Right cardiac atrium (tissue), 5 donors: ENCODE measurements at regions of chr20 and their contacts with region 1.

Region 1: GRCh38 chr20:25178563-25179438 is 16.7 kb upstream of the ENTPD6 start:
- DNase-seq: peak in 2 of 3 donors; percentile 54 to 63
- ATAC-seq: peak; percentile 88
- H3K4me3 ChIP-seq: no peak overlapping the region
- H3K27ac ChIP-seq: no peak overlapping the region
- H3K4me1 ChIP-seq: peaks cover 4% of the 10 kb centered on the region
- H3K27me3 ChIP-seq: no peaks in the 10 kb centered on the region

Region 2: DNA sequence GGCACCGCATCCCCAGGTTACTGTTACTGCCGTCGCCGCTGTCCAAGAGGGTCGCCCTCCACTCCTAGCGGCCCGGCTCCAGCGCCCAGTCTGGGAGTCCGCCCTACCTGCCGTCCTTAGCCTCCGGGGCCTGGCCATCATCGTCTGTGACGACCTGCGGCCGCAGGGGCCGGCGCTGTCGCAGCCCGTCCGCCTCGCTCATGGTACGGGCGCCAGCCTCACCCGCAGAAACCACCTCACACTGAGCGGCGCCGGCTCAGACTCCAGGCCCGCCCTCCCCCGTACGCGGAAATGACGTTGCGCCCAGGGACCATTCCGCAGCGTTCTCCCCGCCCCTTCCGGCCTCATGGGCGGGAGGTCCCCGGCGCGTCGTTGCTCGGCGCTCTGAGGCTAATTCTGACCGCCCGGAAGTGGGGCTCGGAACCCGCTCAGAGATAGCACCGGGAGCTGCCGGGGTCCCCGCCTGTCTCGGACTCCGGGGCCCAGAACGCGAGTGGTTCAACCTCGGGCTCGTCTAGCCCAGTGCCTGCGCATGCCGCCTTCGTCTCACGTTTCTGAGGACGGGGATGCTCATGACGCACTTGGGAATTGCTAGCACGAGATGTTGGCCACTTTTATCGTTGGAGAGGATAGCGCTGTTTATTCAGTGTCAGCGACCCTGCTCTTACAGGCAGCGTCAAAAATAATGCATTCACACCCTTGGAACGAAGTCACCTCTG is 186.2 kb before region 1 on chr20 and contains the start of gene APMAP:
- intact Hi-C with region 1: loop called in 2 of 4 experiments (anchors 5 kb)
- DNase-seq: peak; percentile 97 to 99 (median 98)
- ATAC-seq: peak; percentile 97 to 98
- H3K4me3 ChIP-seq: peak within 1 kb of the TSS; percentile 76
- H3K27ac ChIP-seq: peak within 1 kb of the TSS; percentile 98
- H3K4me1 ChIP-seq: no peaks in the 10 kb centered on the region
- H3K27me3 ChIP-seq: no peaks in the 10 kb centered on the region
- total RNA-seq, gene APMAP: 32.8 to 35.1 (median 34.8) TPM

Region 3: DNA sequence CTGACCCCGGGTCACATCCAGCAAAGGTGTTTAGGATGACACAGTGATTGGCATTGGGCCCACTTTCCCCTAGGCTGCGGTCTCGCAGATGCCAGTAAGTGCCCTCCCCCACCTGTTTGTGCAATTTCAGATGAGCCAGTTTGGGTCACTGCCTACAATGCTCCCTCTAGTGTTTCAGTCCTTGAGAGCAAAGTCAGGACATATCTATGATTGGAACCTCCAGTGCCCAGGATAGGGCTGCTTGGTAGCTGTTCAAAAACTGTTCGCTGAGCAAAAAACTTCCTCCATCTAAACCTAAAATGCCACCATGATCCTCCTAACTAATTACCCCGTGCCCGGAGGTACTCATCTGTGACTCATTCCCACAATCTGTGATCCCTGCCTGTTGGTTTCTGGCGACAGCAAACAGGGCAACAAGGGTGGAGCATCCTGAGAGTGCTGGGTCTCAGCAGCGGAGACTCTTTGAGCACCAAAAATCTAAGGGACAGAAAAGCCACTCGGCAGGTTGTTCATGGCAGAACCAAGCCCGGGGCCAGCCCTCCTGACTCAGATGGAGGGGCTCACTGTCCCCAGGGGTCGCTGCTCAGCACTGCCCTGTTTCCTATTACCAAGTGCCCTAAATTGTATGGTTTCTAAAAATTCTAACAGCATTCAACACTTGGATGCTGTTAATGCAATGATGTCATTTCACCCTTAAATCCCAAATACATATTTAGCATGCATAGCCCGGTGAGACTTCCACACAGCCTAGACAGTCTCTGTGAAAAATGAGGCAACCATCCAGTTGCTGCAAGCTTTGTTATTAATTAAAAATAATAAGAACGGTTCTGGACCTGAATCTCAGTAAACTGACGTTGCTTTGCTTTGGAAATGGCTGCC is 101.8 kb before region 1 on chr20:
- intact Hi-C with region 1: loop called in 2 of 4 experiments (anchors 5 kb)
- DNase-seq: no peak
- ATAC-seq: peak; percentile 27 to 42
- H3K4me3 ChIP-seq: no peak overlapping the region
- H3K27ac ChIP-seq: no peak overlapping the region
- H3K4me1 ChIP-seq: no peaks in the 10 kb centered on the region
- H3K27me3 ChIP-seq: no peaks in the 10 kb centered on the region

Region 4: GRCh38 chr20:25084626-25085187 is 94.1 kb before region 1 on chr20:
- intact Hi-C with region 1: loop called in 2 of 4 experiments (anchors 5 kb)
- DNase-seq: no peak
- ATAC-seq: no peak
- H3K4me3 ChIP-seq: no peak overlapping the region
- H3K27ac ChIP-seq: no peak overlapping the region
- H3K4me1 ChIP-seq: no peaks in the 10 kb centered on the region
- H3K27me3 ChIP-seq: no peaks in the 10 kb centered on the region

Region 5: DNA sequence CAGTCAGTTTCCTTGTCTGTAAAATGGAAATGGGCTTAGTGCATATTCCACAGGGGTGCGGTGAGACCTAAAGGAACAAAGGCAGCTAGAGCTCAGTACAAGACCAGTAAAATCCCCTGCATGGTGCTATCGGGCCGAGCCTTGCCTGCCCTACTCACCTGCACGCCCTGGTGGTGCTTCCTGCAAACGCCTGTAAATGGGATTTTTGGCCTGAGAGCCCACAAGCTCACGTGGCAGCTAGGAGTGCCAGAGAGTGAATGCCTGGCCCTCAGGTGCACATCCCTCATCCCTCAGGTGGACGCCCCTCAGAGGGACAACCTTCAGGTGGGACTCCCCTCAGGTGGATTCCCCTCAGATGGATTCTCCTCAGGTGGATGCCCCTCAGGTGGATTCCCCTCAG is 48.9 kb before region 1 on chr20:
- intact Hi-C with region 1: loop called in 1 of 4 experiments (anchors 10 kb)
- DNase-seq: no peak
- ATAC-seq: no peak
- H3K4me3 ChIP-seq: no peak overlapping the region
- H3K27ac ChIP-seq: no peak overlapping the region
- H3K4me1 ChIP-seq: no peaks in the 10 kb centered on the region
- H3K27me3 ChIP-seq: no peaks in the 10 kb centered on the region

Region 6: DNA sequence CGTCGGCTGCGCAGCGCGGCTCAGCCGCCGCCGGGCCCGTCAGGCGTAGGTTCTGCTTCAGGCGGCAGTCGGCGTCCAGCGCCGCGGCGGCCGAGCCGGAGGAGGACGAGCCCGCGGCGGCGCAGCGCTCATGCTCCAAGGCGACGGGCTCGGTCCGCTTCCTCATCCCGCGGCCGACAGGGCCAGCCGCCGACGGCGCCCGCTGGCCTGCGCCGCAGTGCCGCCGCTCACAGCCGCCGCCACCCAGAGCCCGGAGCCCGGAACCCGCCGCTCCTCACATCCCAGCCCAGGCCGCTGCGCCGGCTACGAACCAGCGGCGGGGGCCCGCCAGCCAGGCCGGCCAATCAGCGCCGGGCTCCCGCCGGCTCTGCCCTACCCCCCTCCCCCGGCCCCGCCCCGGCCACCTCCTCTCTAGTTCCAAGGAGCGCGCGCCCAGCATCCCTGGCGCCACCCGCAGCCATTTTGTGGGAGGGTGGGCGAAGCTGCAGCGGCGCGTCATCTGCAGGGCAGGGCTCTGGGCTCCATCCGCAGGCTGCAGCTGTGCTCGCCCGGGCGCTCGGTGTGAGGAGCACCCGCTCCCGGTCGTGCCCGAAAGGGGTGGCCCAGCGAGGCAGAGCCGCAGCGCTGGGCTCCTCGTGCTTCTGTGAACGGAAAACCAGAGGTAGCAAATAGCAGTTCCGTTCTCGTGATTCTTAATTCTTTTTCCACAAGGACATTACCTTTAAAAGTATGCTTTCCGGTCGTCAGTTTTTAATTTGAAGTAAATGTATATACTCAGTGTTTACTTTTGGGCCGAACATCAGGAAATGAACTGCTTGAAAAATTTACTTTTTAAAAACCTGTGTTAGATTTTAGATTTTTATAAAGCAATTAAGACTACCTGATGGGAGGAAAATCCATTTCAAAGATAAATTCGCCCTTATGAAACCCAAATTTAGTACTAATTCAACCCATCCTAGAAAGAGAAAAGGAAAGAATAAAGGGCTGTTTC is 212.0 kb after region 1 on chr20 and contains the start of gene ABHD12:
- intact Hi-C with region 1: no loop called
- DNase-seq: peak; percentile 97 to 99 (median 99)
- ATAC-seq: peak; percentile 99 to 100
- H3K4me3 ChIP-seq: peak within 1 kb of the TSS; percentile 75
- H3K27ac ChIP-seq: peak within 1 kb of the TSS; percentile 85
- H3K4me1 ChIP-seq: no peaks in the 10 kb centered on the region
- H3K27me3 ChIP-seq: no peaks in the 10 kb centered on the region
- total RNA-seq, gene ABHD12: 22.6 to 28.3 (median 26.0) TPM

Region 7: DNA sequence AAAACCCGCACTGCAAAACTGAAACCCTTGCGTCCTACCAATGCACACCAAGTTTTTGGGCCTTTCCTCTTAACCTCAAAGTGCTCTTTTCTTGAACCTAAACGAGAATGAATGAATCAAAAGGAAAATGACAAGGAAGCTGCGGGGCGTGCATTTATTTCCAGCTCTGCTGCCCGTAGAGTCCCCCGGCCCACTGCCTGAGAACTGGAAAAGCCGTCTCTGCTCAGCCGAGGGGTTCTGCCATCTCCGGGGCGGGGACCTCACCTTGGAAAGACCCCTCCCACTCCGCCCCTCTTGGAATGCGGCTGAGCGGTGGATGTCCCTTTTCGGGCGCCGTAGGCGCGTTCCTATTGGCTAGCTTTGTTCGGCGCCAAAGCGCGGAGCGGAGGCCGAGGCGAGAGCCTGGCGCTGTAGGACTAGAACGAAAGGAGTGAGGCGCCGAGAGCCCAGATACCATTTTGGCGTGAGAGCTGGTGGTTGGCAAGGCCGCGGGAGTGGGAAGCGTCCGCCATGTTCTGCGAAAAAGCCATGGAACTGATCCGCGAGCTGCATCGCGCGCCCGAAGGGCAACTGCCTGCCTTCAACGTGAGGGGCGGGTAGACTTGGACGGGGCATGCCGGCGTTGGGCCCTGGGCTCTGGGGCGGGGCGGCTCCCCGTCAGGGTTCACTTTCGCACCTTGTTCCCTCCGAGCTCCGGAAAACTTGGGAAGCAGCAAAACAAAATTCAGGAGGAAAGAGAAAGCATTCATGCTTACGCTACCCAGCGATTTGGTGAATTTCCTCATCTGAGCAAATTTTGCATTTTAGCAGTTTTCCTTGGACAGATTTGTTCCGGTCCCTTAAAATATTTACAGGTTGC is 228.7 kb after region 1 on chr20 and contains the start of gene GINS1:
- intact Hi-C with region 1: loop called in 1 of 4 experiments (anchors 10 kb)
- DNase-seq: peak; percentile 85 to 92 (median 92)
- ATAC-seq: peak; percentile 97
- H3K4me3 ChIP-seq: peak within 1 kb of the TSS; percentile 91
- H3K27ac ChIP-seq: no peak within 1 kb of the TSS
- H3K4me1 ChIP-seq: no peaks in the 10 kb centered on the region
- H3K27me3 ChIP-seq: no peaks in the 10 kb centered on the region
- total RNA-seq, gene GINS1: 0.45 to 0.85 (median 0.63) TPM

Region 8: GRCh38 chr20:25525295-25526266 is 346.8 kb after region 1 on chr20:
- intact Hi-C with region 1: no loop called
- DNase-seq: no peak
- ATAC-seq: no peak
- H3K4me3 ChIP-seq: no peak overlapping the region
- H3K27ac ChIP-seq: no peak overlapping the region
- H3K4me1 ChIP-seq: no peaks in the 10 kb centered on the region
- H3K27me3 ChIP-seq: no peaks in the 10 kb centered on the region